ENCODE measurements at regions of chr5 and their contacts with region 1.

Region 1: GRCh38 chr5:956941-957747 is 51.5 kb upstream of the NKD2 start:
- DNase-seq: peak; percentile 74
- H3K4me3 Mint-ChIP-seq: no peak overlapping the region
- H3K27ac Mint-ChIP-seq: no peak overlapping the region
- H3K4me1 Mint-ChIP-seq: peaks cover 21% of the 10 kb centered on the region
- H3K27me3 Mint-ChIP-seq: peaks cover 23% of the 10 kb centered on the region

Region 2: DNA sequence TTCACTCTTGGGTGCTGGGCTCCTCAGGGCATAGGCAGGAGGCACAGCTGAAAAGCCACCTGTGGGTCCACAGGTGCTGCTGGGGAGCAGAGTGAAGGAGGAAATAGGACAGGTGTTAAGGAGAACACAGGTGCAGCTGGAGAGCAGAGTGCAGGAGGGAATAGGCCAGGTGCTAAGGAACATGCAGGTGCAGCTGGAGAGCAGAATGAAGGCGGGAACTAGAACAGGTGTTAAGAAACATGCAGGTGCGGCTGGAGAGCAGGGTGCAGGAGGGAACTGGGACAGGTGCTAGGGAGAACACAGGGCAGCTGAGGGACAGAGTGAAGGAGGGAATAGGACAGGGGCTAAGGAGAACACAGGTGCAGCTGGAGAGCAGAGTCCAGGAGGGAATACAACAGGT is 909.0 kb before region 1 on chr5:
- CTCF ChIA-PET with region 1: no interaction called
- POLR2A ChIA-PET with region 1: no interaction called
- intact Hi-C with region 1: no loop called
- DNase-seq: no peak
- H3K4me3 Mint-ChIP-seq: no peak overlapping the region
- H3K27ac Mint-ChIP-seq: no peak overlapping the region
- H3K4me1 Mint-ChIP-seq: no peaks in the 10 kb centered on the region
- H3K27me3 Mint-ChIP-seq: peaks cover 28% of the 10 kb centered on the region

Region 3: GRCh38 chr5:912280-913091 is 44.7 kb before region 1 on chr5:
- CTCF ChIA-PET with region 1: no interaction called
- POLR2A ChIA-PET with region 1: no interaction called
- intact Hi-C with region 1: loop called (anchors 1 kb)
- DNase-seq: peak; percentile 88
- H3K4me3 Mint-ChIP-seq: no peak overlapping the region
- H3K27ac Mint-ChIP-seq: peak overlapping the region; percentile 75
- H3K4me1 Mint-ChIP-seq: peaks cover 13% of the 10 kb centered on the region
- H3K27me3 Mint-ChIP-seq: no peaks in the 10 kb centered on the region

Region 4: GRCh38 chr5:982377-983237 is 25.5 kb after region 1 on chr5:
- CTCF ChIA-PET with region 1: no interaction called
- POLR2A ChIA-PET with region 1: no interaction called
- intact Hi-C with region 1: no loop called
- DNase-seq: no peak
- H3K4me3 Mint-ChIP-seq: no peak overlapping the region
- H3K27ac Mint-ChIP-seq: no peak overlapping the region
- H3K4me1 Mint-ChIP-seq: no peaks in the 10 kb centered on the region
- H3K27me3 Mint-ChIP-seq: peaks cover 27% of the 10 kb centered on the region

Measured in activated CD4-positive, alpha-beta memory T cell treated with anti-CD3 and anti-CD28 coated beads for 36 hours (primary cell).